Activated CD4-positive, alpha-beta memory T cell treated with anti-CD3 and anti-CD28 coated beads, Interleukin-2, amount 10 ng/mL, durations not matched to agents 7 days and 5 days (primary cell): ENCODE measurements at regions of chr16 and their contacts with region 1.

Region 1: DNA sequence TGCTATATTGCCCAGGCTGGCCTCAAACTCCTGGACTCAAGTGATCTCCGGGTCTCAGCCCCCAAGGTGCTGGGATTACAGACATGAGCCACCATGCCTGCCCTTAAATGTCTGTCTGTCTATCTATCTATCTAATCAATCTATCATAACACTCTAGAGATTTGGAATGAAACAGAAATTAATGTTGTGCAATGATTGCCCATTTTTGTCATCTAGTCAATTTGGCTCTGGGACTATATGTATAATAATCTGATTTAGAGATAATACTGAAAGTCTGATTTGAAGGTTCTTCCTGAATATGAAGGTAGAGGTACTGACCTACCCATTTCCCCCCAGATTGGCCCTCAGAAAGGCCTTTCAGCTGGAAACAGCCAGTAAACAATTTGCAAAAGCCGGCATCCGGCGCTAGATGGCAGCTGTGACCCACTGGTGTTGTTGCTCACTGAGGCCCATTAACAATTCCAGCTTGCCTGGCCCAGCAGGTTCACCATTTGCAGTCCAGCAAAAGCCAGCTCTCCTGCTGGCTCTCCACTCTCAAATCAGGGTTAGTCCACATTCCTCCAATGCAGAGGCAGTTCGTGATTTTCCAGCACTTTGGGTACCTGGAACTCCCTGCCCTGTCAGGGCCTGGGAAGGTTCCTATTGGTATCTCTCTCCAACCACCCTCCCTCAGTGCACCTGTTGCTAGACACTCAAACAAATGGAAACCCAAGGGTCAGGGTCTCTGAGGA is 22.9 kb upstream of the C16orf87 start:
- DNase-seq: peak; percentile 75
- H3K4me3 Mint-ChIP-seq: no peak overlapping the region
- H3K27ac Mint-ChIP-seq: no peak overlapping the region
- H3K4me1 Mint-ChIP-seq: peaks cover 3% of the 10 kb centered on the region
- H3K27me3 Mint-ChIP-seq: no peaks in the 10 kb centered on the region

Region 2: DNA sequence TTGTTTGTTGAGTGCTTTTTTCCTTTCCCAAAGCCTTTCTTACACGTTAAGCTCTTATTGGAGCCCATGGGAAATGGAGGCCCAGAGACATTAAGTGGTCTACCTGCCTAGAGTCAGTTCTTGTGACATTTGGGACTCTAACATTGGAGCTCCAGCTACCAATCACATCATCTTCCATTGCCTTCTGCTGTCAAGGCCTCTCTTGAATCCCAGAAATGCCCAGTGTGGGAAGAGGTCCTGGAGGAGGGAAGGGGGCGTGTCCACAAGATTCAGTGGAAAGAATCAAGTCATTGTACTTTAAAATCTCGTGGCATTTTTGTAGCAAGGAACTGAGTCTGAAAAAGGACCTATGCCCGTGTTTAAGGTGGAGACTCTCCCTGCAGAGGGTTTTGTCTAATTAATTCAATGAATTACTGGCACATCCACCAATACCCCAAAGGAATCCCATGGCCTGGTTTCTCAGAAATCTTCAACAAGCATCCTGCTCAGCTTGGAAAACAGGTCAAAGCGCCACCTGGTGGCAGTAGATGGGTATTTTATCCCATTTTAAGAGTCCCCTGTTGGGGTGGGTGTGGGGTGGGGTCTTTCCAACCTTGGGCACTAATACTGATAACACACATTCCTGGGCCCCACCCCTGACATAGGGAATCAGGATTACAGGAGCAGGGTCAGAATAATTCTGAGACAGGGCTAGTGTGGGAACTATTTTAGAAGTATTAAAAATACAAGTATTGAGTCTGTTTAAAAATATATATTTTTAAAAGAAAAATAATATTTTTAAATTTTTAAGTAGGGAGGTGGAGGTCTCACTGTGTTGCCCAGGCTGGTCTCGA is 54.9 kb after region 1 on chr16:
- CTCF ChIA-PET with region 1: interaction called, 139 read pairs
- POLR2A ChIA-PET with region 1: no interaction called
- DNase-seq: peak; percentile 69
- H3K4me3 Mint-ChIP-seq: no peak overlapping the region
- H3K27ac Mint-ChIP-seq: peak overlapping the region; percentile 28
- H3K4me1 Mint-ChIP-seq: peaks cover 24% of the 10 kb centered on the region
- H3K27me3 Mint-ChIP-seq: no peaks in the 10 kb centered on the region

Region 3: DNA sequence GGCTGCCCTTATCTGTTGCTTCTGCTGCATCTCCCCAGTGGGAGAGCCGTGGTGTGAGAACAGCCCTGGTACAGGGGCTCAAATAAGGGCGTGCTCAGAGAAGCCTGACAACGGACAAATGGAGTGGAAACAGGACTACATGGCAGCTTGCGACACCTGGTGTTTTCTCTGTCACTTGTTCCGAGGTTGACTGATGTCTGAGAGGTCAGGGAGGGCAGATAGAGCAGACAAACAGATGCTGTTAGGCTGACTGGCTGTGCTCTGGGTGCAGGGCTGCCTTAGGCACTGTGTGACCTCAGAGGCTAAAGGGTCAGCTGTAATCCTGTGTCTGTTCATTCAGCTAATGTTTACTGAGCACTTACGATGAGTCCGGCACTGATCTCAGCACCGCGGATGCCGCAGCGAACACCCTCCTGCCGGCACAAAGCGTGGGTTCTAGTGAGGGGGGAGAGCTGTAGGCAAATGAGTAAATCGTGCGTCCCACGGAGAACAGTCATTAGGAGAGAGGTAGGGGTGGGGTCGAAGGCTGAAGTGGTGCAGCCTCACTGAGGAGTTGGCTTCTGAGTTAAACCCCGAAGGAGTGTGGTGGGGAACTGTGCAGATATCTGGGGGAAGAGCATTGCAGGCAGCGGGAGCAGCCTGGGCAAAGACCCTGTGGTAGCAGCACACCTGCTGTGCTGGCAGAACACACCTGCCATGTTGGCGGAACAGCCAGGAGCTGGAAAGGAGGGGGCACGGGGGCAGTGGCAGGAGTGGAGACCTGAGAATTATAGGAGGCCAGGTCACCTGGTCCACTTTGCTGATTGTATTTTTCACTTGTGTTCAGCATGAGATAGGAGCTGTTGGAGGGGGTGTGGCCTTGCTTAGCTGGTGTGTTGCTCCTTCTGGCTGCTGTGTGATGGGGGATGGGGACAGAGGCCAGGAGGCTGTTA is 65.2 kb after region 1 on chr16:
- CTCF ChIA-PET with region 1: interaction called, 139 read pairs
- POLR2A ChIA-PET with region 1: no interaction called
- DNase-seq: no peak
- H3K4me3 Mint-ChIP-seq: no peak overlapping the region
- H3K27ac Mint-ChIP-seq: no peak overlapping the region
- H3K4me1 Mint-ChIP-seq: peaks cover 5% of the 10 kb centered on the region
- H3K27me3 Mint-ChIP-seq: no peaks in the 10 kb centered on the region

Region 4: DNA sequence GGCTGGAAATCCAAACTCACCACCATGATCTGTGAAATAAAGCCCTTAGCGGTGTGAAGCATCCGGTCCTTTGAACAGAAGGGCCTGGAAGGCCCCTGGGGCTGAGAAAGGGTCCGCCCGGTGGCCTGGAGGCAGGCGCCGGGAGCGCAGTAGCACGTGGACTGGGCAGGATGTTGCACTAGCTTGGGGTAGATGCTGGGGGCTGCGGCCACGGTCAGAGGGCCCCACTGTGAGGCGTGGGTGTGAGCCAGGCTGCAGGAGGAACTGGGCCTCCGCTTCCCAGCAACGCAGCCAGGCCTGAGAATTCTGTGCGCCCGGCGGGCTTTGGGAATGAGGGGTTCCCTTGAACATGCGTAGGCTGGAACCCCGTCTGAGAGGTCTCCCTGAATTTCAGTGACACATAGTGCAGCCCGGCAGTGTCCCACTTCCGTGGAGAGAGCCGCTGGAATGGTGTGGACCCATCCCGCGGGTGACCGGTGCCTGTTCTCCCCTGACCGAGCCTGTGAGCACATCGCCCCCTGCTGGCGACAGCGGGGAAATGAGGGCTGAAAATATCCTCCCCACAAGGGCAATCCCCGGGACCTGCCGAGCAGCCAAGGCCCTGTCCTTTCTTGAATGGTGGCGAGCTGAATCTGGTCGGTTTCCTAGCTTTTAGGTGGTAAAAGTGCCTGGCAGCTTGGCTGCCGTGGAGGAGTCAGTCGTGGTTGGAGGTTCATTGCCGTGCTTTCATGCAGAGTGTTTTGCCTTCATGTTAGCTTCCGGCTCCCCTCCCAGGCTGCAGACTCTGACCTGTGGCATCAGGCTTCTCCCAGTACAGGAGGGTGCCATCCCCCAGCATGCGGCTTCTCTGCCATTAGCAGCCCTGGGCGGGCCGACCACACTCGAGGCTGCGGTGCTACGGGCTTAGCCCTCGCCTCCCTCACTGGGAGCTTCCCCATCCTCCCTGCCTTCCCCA is 75.8 kb after region 1 on chr16:
- CTCF ChIA-PET with region 1: interaction called, 77 read pairs
- POLR2A ChIA-PET with region 1: no interaction called
- DNase-seq: peak; percentile 75
- H3K4me3 Mint-ChIP-seq: no peak overlapping the region
- H3K27ac Mint-ChIP-seq: no peak overlapping the region
- H3K4me1 Mint-ChIP-seq: peaks cover 1% of the 10 kb centered on the region
- H3K27me3 Mint-ChIP-seq: no peaks in the 10 kb centered on the region

Region 5: DNA sequence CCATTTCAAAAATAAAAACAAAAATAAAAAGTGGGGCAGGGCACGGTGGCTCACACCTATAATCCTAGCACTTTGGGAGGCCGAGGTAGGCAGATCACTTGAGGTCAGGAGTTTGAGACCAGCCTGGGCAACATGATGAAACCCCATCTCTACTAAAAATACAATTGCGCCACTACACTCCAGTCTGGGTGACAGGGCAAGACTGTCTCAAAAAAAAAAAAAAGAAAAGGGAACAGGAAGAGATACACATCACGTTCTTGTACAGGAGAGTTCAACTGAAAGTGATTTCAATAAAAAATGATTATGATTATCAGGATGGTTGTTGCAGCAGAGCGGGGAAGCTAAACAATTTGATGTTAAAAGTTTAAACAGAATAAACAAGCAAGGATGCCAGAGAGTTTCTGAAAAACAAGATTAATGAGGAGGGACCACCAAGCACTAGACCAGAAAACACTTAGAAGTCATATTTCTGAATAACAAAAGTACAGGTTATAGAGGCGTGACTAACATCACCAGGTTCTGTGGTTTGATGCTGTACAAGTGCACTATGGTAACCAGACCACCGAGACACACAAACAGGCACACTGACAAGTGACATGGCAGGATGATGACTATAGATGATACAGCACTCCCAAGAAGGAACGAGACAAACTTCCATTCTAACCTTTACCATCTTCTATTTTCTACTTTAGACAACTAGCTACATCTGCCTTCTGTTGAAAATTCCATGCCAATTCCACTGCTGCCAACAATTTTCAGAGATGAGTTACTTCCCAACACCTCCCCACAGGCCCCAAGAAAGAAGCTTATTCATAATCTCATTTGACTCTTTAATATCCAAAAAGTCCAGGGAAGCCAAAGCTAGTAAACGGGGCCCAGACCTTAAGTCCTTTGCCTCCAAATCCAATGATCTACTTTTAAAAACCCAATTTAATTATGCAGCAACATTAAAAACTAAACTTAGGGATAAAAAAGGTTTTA is 107.8 kb after region 1 on chr16:
- CTCF ChIA-PET with region 1: no interaction called
- POLR2A ChIA-PET with region 1: no interaction called
- DNase-seq: peak; percentile 37
- H3K4me3 Mint-ChIP-seq: no peak overlapping the region
- H3K27ac Mint-ChIP-seq: peak overlapping the region; percentile 58
- H3K4me1 Mint-ChIP-seq: peaks cover 24% of the 10 kb centered on the region
- H3K27me3 Mint-ChIP-seq: no peaks in the 10 kb centered on the region